ENCODE measurements at regions of chr5 and their contacts with region 1.

Region 1: DNA sequence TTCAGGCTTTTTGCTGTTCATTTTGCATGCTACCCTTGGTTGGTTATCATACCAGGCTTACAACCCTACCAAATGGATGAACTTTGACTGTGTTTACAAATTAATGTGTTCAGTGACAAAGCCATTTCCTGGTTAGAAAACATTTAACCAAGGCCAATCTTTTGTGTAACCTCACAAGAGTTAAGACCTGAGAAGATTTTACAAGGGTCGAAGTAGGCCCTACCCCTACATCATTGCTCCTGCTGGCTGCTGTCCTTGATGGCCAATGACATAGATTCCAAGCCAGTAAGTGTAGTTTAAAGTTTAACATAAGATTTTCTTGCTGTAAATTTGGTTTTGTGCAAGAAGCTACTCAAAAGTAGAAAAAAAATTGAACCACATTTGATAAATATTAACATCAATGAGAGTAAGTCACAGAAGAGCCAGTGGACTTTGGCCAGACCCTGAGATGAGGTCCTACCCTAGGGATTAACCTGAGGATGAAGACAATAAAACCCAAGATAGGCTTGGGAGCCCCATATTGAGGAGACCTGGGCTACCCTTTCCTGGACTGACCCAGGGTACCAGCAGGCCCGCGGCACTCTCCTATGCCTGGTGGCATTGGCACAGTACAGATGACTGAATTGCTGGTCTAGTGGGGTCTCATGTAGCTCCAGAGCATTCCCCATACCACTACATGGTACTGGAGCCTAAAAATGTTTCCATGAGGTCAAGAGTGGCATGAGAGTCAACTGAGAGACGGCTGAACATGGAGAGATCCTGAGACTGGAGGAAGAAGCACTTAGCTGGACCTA is 8.3 kb downstream of the C1QTNF3 start:
- DNase-seq: no peak
- H3K4me3 ChIP-seq: no peak overlapping the region
- CTCF ChIP-seq: no peak

Region 2: DNA sequence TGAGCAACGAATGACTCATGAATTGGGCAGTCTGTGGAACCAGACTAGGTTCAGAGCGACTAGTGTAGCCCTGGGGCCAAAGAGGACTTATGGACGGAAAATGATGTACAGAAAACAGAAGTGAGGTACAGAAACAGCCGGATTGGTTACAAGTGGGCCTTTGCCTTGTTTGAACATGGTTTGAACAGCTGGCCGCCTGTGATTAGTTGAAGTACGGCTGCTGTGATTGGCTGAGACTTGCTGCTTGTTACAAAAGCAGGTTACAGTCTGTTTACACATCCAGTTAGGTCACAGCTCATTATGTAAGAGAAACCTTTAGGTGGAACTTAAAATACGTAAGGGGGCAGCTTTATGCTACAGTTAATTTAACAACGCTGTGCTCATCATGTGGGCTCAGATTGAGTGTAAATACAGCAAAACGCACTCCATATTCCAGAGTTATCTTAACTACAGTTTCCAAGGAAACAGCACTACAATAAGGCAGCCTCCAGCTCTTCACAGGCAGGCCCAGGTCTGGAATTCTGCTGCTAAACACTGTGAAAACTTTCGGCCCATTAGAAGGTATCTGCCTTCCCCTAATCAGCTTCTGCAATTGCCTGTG is 33.4 kb before region 1 on chr5:
- in situ Hi-C with region 1: loop called (anchors 5 kb)
- DNase-seq: no peak
- H3K4me3 ChIP-seq: no peak overlapping the region
- CTCF ChIP-seq: no peak